Heart right ventricle (tissue), 16 donors: ENCODE measurements at regions of chr1 and their contacts with region 1.

Region 1: GRCh38 chr1:204494281-204495077 is at the start of gene PIK3C2B:
- DNase-seq: peak; percentile 86 to 88
- ATAC-seq: peak; percentile 90 to 98 (median 93)
- H3K4me3 ChIP-seq: peak within 1 kb of the TSS; percentile 55 to 93 (median 88)
- H3K27ac ChIP-seq: peak within 1 kb of the TSS; percentile 86 to 96 (median 94)
- H3K4me1 ChIP-seq: peaks cover 12 to 62% (median 39%) of the 10 kb centered on the region in 9 donors
- H3K27me3 ChIP-seq: no peaks in the 10 kb centered on the region
- CTCF ChIP-seq: peak; percentile 53 to 76 (median 69)
- total RNA-seq, gene PIK3C2B: 16.4 to 31.9 (median 23.0) TPM

Region 2: GRCh38 chr1:204431310-204432165 is 62.9 kb before region 1 on chr1:
- intact Hi-C with region 1: loop called in 1 of 10 experiments (anchors 5 kb)
- DNase-seq: peak; percentile 80
- ATAC-seq: peak; percentile 57 to 85 (median 76)
- H3K4me3 ChIP-seq: no peak overlapping the region
- H3K27ac ChIP-seq: peak overlapping the region in 3 of 10 donors; percentile 11 to 42 (median 12)
- H3K4me1 ChIP-seq: peaks cover 0 to 37% (median 10%) of the 10 kb centered on the region in 9 donors
- H3K27me3 ChIP-seq: no peaks in the 10 kb centered on the region
- CTCF ChIP-seq: peak; percentile 79 to 98 (median 94)

Region 3: GRCh38 chr1:204446370-204447111 is 47.9 kb before region 1 on chr1:
- intact Hi-C with region 1: loop called in 8 of 10 experiments (anchors 1 to 5 kb)
- DNase-seq: peak; percentile 76 to 79
- ATAC-seq: peak; percentile 71 to 79 (median 74)
- H3K4me3 ChIP-seq: no peak overlapping the region
- H3K27ac ChIP-seq: peak overlapping the region in 7 of 10 donors; percentile 4 to 65 (median 58)
- H3K4me1 ChIP-seq: peaks cover 33 to 90% (median 54%) of the 10 kb centered on the region in 9 donors
- H3K27me3 ChIP-seq: no peaks in the 10 kb centered on the region
- CTCF ChIP-seq: peak; percentile 61 to 85 (median 78)

Region 4: GRCh38 chr1:204483791-204484190 is 10.7 kb before region 1 on chr1:
- intact Hi-C with region 1: loop called in 1 of 10 experiments (anchors 1 kb)
- DNase-seq: no peak
- ATAC-seq: no peak
- H3K4me3 ChIP-seq: no peak overlapping the region
- H3K27ac ChIP-seq: peak overlapping the region in 6 of 10 donors; percentile 15 to 81 (median 57)
- H3K4me1 ChIP-seq: peaks cover 8 to 95% (median 61%) of the 10 kb centered on the region in 9 donors
- H3K27me3 ChIP-seq: no peaks in the 10 kb centered on the region
- CTCF ChIP-seq: no peak

Region 5: DNA sequence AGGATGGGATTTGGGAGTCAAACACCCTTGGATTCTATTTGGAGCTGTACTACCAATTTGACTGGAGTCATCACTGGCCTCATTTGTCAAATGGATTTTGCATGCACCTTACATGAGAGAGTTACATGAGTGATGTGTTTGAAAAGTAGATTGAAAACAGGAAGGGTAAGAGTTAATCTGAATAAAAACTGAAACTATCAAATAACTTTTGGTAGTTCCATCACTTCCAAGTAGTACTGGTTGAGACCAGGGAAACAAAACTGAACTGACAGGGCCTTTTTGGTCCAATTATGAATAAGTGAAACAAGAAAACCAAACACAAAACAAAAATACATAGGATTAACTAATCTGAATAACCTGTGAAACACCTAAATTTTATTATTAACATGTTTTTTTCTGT is 1225.3 kb after region 1 on chr1:
- intact Hi-C with region 1: no loop called
- DNase-seq: no peak
- ATAC-seq: no peak
- H3K4me3 ChIP-seq: no peak overlapping the region
- H3K27ac ChIP-seq: no peak overlapping the region
- H3K4me1 ChIP-seq: peaks cover 0 to 6% (median 0%) of the 10 kb centered on the region in 9 donors
- H3K27me3 ChIP-seq: no peaks in the 10 kb centered on the region
- CTCF ChIP-seq: no peak